Natural killer cell (primary cell): ENCODE measurements at regions of chr5 and their contacts with region 1.

Region 1: GRCh38 chr5:56814963-56815658 is at the start of gene MAP3K1:
- DNase-seq: peak; percentile 82 to 93
- ATAC-seq: peak; percentile 66 to 86 (median 71)
- H3K4me3 ChIP-seq: peak within 1 kb of the TSS; percentile 95
- H3K4me3 Mint-ChIP-seq: peak within 1 kb of the TSS; percentile 95
- H3K27ac ChIP-seq: peak within 1 kb of the TSS; percentile 92
- H3K27ac Mint-ChIP-seq: peak within 1 kb of the TSS; percentile 92 to 93
- H3K4me1 ChIP-seq: peaks cover 11% of the 10 kb centered on the region
- H3K4me1 Mint-ChIP-seq: peaks cover 34 to 35% of the 10 kb centered on the region in 2 donors
- H3K27me3 ChIP-seq: no peaks in the 10 kb centered on the region
- H3K27me3 Mint-ChIP-seq: no peaks in the 10 kb centered on the region
- CTCF ChIP-seq: no peak
- total RNA-seq, gene MAP3K1: 27.8 to 35.7 (median 35.5) TPM

Region 2: DNA sequence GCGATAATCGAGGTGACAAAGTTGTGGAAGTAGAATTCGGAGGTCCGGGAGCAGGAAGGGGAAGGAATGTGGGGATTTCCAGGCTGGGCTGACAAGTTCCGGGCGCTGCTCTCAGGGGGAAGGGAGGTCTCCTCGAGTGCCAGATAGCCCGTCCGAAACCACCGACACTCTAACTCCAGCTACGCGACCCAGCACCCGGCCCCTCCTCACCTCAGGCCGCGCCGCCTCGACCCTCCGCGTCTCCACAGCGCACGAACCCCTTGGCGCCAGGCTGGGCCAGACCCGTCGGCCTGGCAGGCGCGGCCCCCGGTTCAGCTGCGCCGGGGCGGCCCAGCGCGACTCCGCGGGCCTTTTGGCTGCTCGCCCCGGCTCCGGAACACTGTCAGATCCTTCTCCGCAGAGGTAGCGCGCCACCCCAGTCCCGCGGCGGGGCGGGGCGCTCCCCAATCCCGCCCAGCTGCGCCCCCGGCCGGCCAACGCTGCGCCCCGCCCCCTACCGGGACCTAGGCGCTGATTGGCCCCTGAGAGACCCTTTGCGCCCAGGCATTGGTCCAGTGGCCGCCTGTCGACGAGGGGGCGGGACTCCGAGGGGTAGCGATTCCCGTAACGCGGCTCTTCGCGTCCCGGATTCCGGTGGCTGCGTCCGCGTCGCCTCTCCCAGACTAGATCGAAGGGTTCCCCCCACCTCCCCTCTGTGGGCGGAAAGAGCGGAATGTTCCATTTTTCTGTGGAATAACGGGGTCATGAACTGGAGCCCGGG is 820.4 kb before region 1 on chr5 and contains the start of gene IL6ST:
- intact Hi-C with region 1: loop called (anchors 2 kb)
- DNase-seq: peak; percentile 95 to 98
- ATAC-seq: peak; percentile 95 to 100 (median 98)
- H3K4me3 ChIP-seq: peak within 1 kb of the TSS; percentile 94
- H3K4me3 Mint-ChIP-seq: peak within 1 kb of the TSS; percentile 99
- H3K27ac ChIP-seq: peak within 1 kb of the TSS; percentile 77
- H3K27ac Mint-ChIP-seq: peak within 1 kb of the TSS; percentile 92 to 96
- H3K4me1 ChIP-seq: peaks cover 5% of the 10 kb centered on the region
- H3K4me1 Mint-ChIP-seq: peaks cover 29 to 45% of the 10 kb centered on the region in 2 donors
- H3K27me3 ChIP-seq: no peaks in the 10 kb centered on the region
- H3K27me3 Mint-ChIP-seq: no peaks in the 10 kb centered on the region
- CTCF ChIP-seq: no peak
- total RNA-seq, gene IL6ST: 48.5 to 73.0 (median 53.8) TPM

Region 3: GRCh38 chr5:56829137-56829908 is 14.2 kb after region 1 on chr5:
- intact Hi-C with region 1: loop called (anchors 1 kb)
- DNase-seq: peak in 1 of 2 donors; percentile 76
- ATAC-seq: peak; percentile 51 to 73 (median 58)
- H3K4me3 ChIP-seq: no peak overlapping the region
- H3K4me3 Mint-ChIP-seq: peak overlapping the region; percentile 9
- H3K27ac ChIP-seq: peak overlapping the region; percentile 43
- H3K27ac Mint-ChIP-seq: peak overlapping the region in 1 of 2 donors; percentile 51
- H3K4me1 ChIP-seq: peaks cover 32% of the 10 kb centered on the region
- H3K4me1 Mint-ChIP-seq: peaks cover 87 to 88% of the 10 kb centered on the region in 2 donors
- H3K27me3 ChIP-seq: no peaks in the 10 kb centered on the region
- H3K27me3 Mint-ChIP-seq: no peaks in the 10 kb centered on the region
- CTCF ChIP-seq: no peak

Region 4: GRCh38 chr5:56845277-56845676 is 30.2 kb after region 1 on chr5:
- intact Hi-C with region 1: loop called (anchors 5 kb)
- DNase-seq: peak in 1 of 2 donors; percentile 49
- ATAC-seq: peak; percentile 37 to 70 (median 51)
- H3K4me3 ChIP-seq: no peak overlapping the region
- H3K4me3 Mint-ChIP-seq: no peak overlapping the region
- H3K27ac ChIP-seq: no peak overlapping the region
- H3K27ac Mint-ChIP-seq: peak overlapping the region; percentile 11 to 72
- H3K4me1 ChIP-seq: peaks cover 9% of the 10 kb centered on the region
- H3K4me1 Mint-ChIP-seq: peaks cover 72% of the 10 kb centered on the region in 2 donors
- H3K27me3 ChIP-seq: no peaks in the 10 kb centered on the region
- H3K27me3 Mint-ChIP-seq: no peaks in the 10 kb centered on the region
- CTCF ChIP-seq: no peak

Region 5: GRCh38 chr5:56909294-56910209 is 94.4 kb after region 1 on chr5 and contains the start of gene SETD9:
- intact Hi-C with region 1: loop called (anchors 2 kb)
- DNase-seq: peak; percentile 81 to 92
- ATAC-seq: peak; percentile 82 to 92 (median 85)
- H3K4me3 ChIP-seq: peak within 1 kb of the TSS; percentile 58
- H3K4me3 Mint-ChIP-seq: peak within 1 kb of the TSS; percentile 99
- H3K27ac ChIP-seq: peak within 1 kb of the TSS; percentile 78
- H3K27ac Mint-ChIP-seq: peak within 1 kb of the TSS; percentile 90 to 93
- H3K4me1 ChIP-seq: peaks cover 10% of the 10 kb centered on the region
- H3K4me1 Mint-ChIP-seq: peaks cover 21 to 23% of the 10 kb centered on the region in 2 donors
- H3K27me3 ChIP-seq: no peaks in the 10 kb centered on the region
- H3K27me3 Mint-ChIP-seq: no peaks in the 10 kb centered on the region
- CTCF ChIP-seq: no peak
- total RNA-seq, gene SETD9: 5.6 to 8.6 (median 6.0) TPM

Region 6: DNA sequence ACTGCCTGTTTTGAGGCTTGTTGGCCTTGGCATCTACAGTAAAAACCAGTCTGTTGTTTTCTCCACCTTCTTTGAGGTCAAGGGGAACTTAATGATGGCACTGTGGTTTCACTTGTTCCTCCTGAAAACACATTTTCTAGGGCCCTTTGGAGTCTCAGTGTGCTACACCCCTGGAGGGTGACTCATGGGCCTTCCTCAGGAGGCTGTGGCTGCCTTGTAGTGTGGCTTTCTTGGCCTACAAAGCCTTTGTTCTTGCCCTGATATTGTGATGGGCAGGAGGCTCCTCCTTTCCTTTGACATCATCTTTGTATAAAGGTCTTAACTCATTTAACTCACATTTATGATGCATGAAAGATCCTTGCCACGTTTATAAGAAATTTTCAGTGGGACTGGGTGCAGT is 302.5 kb after region 1 on chr5:
- intact Hi-C with region 1: no loop called
- DNase-seq: peak in 1 of 2 donors; percentile 74
- ATAC-seq: peak; percentile 44 to 65 (median 52)
- H3K4me3 ChIP-seq: no peak overlapping the region
- H3K4me3 Mint-ChIP-seq: no peak overlapping the region
- H3K27ac ChIP-seq: no peak overlapping the region
- H3K27ac Mint-ChIP-seq: no peak overlapping the region
- H3K4me1 ChIP-seq: no peaks in the 10 kb centered on the region
- H3K4me1 Mint-ChIP-seq: no peaks in the 10 kb centered on the region
- H3K27me3 ChIP-seq: no peaks in the 10 kb centered on the region
- H3K27me3 Mint-ChIP-seq: no peaks in the 10 kb centered on the region
- CTCF ChIP-seq: no peak